Panc1 (cell line): ENCODE measurements at regions of chr3 and their contacts with region 1.

Region 1: GRCh38 chr3:129768728-129769127 is 124.8 kb downstream of the TMCC1 start:
- DNase-seq: no peak
- ATAC-seq: no peak
- H3K4me3 ChIP-seq: no peak overlapping the region
- H3K27ac ChIP-seq: no peak overlapping the region
- H3K4me1 ChIP-seq: 0 out of 2 replicates have a peak, but pooled peaks cover 2% of the 10 kb centered on the region
- H3K27me3 ChIP-seq: no peaks in the 10 kb centered on the region
- CTCF ChIP-seq: no peak

Region 2: GRCh38 chr3:129560901-129561594 is 207.7 kb before region 1 on chr3:
- CTCF ChIA-PET with region 1: no interaction called
- POLR2A ChIA-PET with region 1: no interaction called
- in situ Hi-C with region 1: no loop called
- intact Hi-C with region 1: no loop called
- DNase-seq: no peak
- ATAC-seq: peak; percentile 55
- H3K4me3 ChIP-seq: no peak overlapping the region
- H3K27ac ChIP-seq: peak overlapping the region; percentile 11; the same call in 1 of the 2 replicates
- H3K4me1 ChIP-seq: peaks cover 19% of the 10 kb centered on the region
- H3K27me3 ChIP-seq: no peaks in the 10 kb centered on the region
- CTCF ChIP-seq: no peak

Region 3: DNA sequence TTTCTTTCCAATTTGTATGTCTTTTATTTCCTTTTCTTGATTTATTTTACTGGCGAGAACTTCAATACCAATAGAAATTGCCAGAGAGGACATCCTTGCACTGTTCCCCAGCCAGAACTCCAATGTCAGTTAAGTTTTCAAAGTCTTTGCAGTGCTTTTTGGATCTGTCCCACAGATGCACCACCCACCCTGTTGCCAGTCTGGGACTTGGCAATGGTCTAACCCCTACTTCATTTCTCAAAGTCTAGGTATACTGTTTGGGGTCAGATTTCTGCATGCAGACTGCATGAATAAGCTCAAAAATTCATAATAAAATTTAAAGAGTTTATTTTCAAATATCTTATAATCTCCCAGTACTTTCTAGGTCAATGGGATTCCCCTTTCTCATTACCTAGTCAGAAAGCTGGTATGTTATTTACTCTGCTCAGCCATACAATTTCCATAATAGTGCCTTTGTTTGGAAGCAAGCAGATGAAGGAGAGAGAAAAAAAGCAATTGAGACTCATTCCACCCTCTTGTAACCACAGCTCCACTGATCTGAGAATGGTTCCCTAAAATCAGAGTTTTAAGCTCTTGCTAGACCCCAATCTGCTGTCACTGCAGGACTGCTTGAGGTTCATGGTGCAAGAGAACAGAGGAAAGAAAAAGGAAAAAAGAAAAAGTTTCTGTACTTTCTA is 36.4 kb before region 1 on chr3:
- CTCF ChIA-PET with region 1: no interaction called
- POLR2A ChIA-PET with region 1: no interaction called
- in situ Hi-C with region 1: loop called (anchors 5 kb)
- intact Hi-C with region 1: no loop called
- DNase-seq: no peak
- ATAC-seq: peak; percentile 77
- H3K4me3 ChIP-seq: no peak overlapping the region
- H3K27ac ChIP-seq: no peak overlapping the region; the same call in 1 of the 2 replicates
- H3K4me1 ChIP-seq: peaks cover 14% of the 10 kb centered on the region
- H3K27me3 ChIP-seq: no peaks in the 10 kb centered on the region
- CTCF ChIP-seq: no peak